CD8-positive, alpha-beta memory T cell (primary cell): ENCODE measurements at regions of chr12 and their contacts with region 1.

Region 1: GRCh38 chr12:94101738-94102660 is 46.4 kb upstream of the PLXNC1 start:
- DNase-seq: peak; percentile 69 to 86 (median 76)
- H3K4me3 ChIP-seq: peak overlapping the region; percentile 57
- H3K4me3 Mint-ChIP-seq: peak overlapping the region; percentile 86 to 94 (median 88)
- H3K27ac ChIP-seq: peak overlapping the region; percentile 19
- H3K27ac Mint-ChIP-seq: peak overlapping the region in 7 of 8 donors; percentile 17 to 90 (median 70)
- H3K4me1 ChIP-seq: peaks cover 9% of the 10 kb centered on the region
- H3K4me1 Mint-ChIP-seq: peaks cover 5 to 12% (median 10%) of the 10 kb centered on the region in 3 donors
- H3K27me3 ChIP-seq: no peaks in the 10 kb centered on the region
- H3K27me3 Mint-ChIP-seq: peaks cover 23 to 44% of the 10 kb centered on the region in 2 donors

Region 2: GRCh38 chr12:92987362-92987761 is 1114.6 kb before region 1 on chr12:
- CTCF ChIA-PET with region 1: interaction called, 37 read pairs
- POLR2A ChIA-PET with region 1: no interaction called
- DNase-seq: peak in 2 of 5 donors; percentile 41 to 51
- H3K4me3 ChIP-seq: no peak overlapping the region
- H3K4me3 Mint-ChIP-seq: peak overlapping the region in 1 of 7 donors; percentile 51
- H3K27ac ChIP-seq: no peak overlapping the region
- H3K27ac Mint-ChIP-seq: peak overlapping the region in 2 of 8 donors; percentile 27 to 82
- H3K4me1 ChIP-seq: peaks cover 8% of the 10 kb centered on the region
- H3K4me1 Mint-ChIP-seq: peaks cover 8 to 11% (median 10%) of the 10 kb centered on the region in 3 donors
- H3K27me3 ChIP-seq: no peaks in the 10 kb centered on the region
- H3K27me3 Mint-ChIP-seq: peaks cover 1 to 13% of the 10 kb centered on the region in 2 donors

Region 3: DNA sequence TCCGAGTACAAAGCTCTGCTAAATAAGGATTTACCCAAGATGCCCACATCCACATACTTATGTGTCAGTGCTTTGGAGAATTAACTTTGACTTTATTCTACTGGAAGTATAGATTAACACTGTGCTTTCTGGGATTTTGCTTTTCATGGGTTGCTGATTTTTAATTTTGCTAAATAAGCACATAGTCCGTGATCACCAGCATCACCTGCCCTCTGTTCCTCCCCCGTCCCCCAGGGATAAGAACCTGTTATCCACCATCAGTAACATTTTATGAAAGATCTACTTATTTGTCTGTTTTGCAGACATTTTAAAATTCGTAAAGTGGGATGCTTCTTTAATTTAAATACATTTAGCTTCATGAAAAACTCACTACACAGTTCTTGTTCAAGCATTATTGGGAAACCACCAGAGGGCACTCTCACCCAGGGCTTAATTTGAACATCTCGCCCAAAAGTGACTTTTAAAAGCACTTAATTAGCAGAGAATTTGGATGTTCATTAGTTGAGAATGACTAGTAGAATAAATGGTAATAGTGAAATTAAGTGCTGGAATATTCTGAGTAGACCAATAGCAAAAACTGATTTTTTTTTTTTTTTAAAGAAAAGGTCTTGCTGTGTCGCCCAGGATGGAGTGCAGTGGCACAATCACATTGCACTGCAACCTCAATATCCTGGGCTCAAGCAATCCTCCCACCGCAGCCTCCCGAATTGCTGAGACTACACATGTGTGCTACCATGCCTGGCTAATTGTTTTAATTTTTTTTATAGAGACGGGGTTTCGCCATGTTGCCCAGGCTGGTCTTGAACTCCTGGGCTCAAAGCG is 599.0 kb before region 1 on chr12:
- CTCF ChIA-PET with region 1: interaction called, 254 read pairs
- POLR2A ChIA-PET with region 1: interaction called, 11 read pairs
- DNase-seq: peak; percentile 37 to 61 (median 50)
- H3K4me3 ChIP-seq: no peak overlapping the region
- H3K4me3 Mint-ChIP-seq: no peak overlapping the region
- H3K27ac ChIP-seq: no peak overlapping the region
- H3K27ac Mint-ChIP-seq: peak overlapping the region in 1 of 8 donors; percentile 68
- H3K4me1 ChIP-seq: no peaks in the 10 kb centered on the region
- H3K4me1 Mint-ChIP-seq: no peaks in the 10 kb centered on the region
- H3K27me3 ChIP-seq: no peaks in the 10 kb centered on the region
- H3K27me3 Mint-ChIP-seq: no peaks in the 10 kb centered on the region

Region 4: GRCh38 chr12:93541578-93542225 is 560.3 kb before region 1 on chr12:
- CTCF ChIA-PET with region 1: interaction called, 16 read pairs
- POLR2A ChIA-PET with region 1: no interaction called
- DNase-seq: no peak
- H3K4me3 ChIP-seq: no peak overlapping the region
- H3K4me3 Mint-ChIP-seq: peak overlapping the region in 2 of 7 donors; percentile 20 to 48
- H3K27ac ChIP-seq: no peak overlapping the region
- H3K27ac Mint-ChIP-seq: peak overlapping the region in 5 of 8 donors; percentile 21 to 90 (median 61)
- H3K4me1 ChIP-seq: peaks cover 27% of the 10 kb centered on the region
- H3K4me1 Mint-ChIP-seq: peaks cover 2 to 16% (median 9%) of the 10 kb centered on the region in 3 donors
- H3K27me3 ChIP-seq: no peaks in the 10 kb centered on the region
- H3K27me3 Mint-ChIP-seq: peaks cover 0 to 3% of the 10 kb centered on the region in 2 donors

Region 5: GRCh38 chr12:93766796-93767523 is 335.0 kb before region 1 on chr12:
- CTCF ChIA-PET with region 1: interaction called, 37 read pairs
- POLR2A ChIA-PET with region 1: no interaction called
- DNase-seq: peak in 2 of 5 donors; percentile 6 to 21
- H3K4me3 ChIP-seq: no peak overlapping the region
- H3K4me3 Mint-ChIP-seq: peak overlapping the region in 4 of 7 donors; percentile 13 to 49 (median 30)
- H3K27ac ChIP-seq: no peak overlapping the region
- H3K27ac Mint-ChIP-seq: peak overlapping the region; percentile 1 to 97 (median 58)
- H3K4me1 ChIP-seq: peaks cover 18% of the 10 kb centered on the region
- H3K4me1 Mint-ChIP-seq: peaks cover 36 to 44% (median 38%) of the 10 kb centered on the region in 3 donors
- H3K27me3 ChIP-seq: no peaks in the 10 kb centered on the region
- H3K27me3 Mint-ChIP-seq: no peaks in the 10 kb centered on the region

Region 6: GRCh38 chr12:94126067-94126466 is 24.1 kb after region 1 on chr12:
- CTCF ChIA-PET with region 1: interaction called, 28 read pairs
- POLR2A ChIA-PET with region 1: no interaction called
- DNase-seq: peak in 1 of 5 donors; percentile 21
- H3K4me3 ChIP-seq: no peak overlapping the region
- H3K4me3 Mint-ChIP-seq: peak overlapping the region in 2 of 7 donors; percentile 2 to 32
- H3K27ac ChIP-seq: no peak overlapping the region
- H3K27ac Mint-ChIP-seq: peak overlapping the region in 4 of 8 donors; percentile 40 to 69 (median 50)
- H3K4me1 ChIP-seq: peaks cover 49% of the 10 kb centered on the region
- H3K4me1 Mint-ChIP-seq: peaks cover 33 to 50% (median 34%) of the 10 kb centered on the region in 3 donors
- H3K27me3 ChIP-seq: no peaks in the 10 kb centered on the region
- H3K27me3 Mint-ChIP-seq: peaks cover 3 to 50% of the 10 kb centered on the region in 2 donors